Naive thymus-derived CD4-positive, alpha-beta T cell (primary cell): ENCODE measurements at regions of chr22 and their contacts with region 1.

Region 1: DNA sequence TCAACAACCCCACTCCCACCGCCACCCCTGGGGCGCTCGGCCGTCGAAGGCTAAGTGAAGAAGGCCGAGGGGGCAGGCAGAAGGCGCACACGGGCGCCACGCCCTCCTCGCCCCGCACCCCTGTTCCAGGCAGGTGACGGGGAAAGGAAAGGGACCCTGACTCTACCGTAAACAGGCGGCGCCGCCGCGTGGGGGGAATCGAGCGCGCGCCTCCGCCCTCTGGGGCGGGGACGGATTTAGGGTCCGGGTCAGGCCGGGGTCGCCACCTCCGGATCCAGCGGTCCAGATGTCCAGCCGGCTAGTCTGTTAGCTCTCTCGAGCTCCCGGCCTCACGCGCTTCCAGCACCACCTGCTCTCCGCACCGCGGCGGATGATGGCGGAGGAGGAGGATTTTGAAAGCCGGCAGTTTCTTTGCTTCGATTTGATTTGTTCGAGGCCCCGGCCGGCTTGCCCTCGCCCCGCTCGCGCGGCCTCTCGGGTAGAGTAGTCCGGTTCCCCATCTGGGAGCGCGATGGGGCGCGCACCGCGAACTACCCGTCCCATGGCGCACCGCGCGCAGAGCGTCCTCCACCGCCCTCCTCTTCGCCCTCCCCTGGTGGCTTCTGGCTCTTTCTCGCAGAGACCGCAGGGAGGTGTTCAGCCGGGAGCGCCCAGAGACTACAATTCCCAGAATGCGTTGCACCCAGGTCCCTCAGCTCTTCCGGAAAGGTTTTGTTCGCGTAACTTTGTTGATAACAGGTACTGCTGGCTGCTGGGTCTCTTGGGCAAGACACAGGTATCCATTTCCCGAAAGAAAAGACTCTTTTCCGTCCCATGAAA is at the start of gene RANGAP1:
- DNase-seq: peak; percentile 95 to 99 (median 99)
- ATAC-seq: peak; percentile 96
- H3K4me3 ChIP-seq: peak within 1 kb of the TSS; percentile 93
- H3K4me3 Mint-ChIP-seq: peak within 1 kb of the TSS; percentile 90 to 99 (median 96)
- H3K27ac ChIP-seq: peak within 1 kb of the TSS; percentile 99
- H3K27ac Mint-ChIP-seq: peak within 1 kb of the TSS; percentile 95 to 99 (median 98)
- H3K4me1 ChIP-seq: peaks cover 10 to 15% of the 10 kb centered on the region in 2 donors
- H3K4me1 Mint-ChIP-seq: peaks cover 21 to 46% (median 42%) of the 10 kb centered on the region in 7 donors
- H3K27me3 ChIP-seq: no peaks in the 10 kb centered on the region
- H3K27me3 Mint-ChIP-seq: no peaks in the 10 kb centered on the region
- total RNA-seq, gene RANGAP1: 60.7 to 122 (median 72.4) TPM

Region 2: DNA sequence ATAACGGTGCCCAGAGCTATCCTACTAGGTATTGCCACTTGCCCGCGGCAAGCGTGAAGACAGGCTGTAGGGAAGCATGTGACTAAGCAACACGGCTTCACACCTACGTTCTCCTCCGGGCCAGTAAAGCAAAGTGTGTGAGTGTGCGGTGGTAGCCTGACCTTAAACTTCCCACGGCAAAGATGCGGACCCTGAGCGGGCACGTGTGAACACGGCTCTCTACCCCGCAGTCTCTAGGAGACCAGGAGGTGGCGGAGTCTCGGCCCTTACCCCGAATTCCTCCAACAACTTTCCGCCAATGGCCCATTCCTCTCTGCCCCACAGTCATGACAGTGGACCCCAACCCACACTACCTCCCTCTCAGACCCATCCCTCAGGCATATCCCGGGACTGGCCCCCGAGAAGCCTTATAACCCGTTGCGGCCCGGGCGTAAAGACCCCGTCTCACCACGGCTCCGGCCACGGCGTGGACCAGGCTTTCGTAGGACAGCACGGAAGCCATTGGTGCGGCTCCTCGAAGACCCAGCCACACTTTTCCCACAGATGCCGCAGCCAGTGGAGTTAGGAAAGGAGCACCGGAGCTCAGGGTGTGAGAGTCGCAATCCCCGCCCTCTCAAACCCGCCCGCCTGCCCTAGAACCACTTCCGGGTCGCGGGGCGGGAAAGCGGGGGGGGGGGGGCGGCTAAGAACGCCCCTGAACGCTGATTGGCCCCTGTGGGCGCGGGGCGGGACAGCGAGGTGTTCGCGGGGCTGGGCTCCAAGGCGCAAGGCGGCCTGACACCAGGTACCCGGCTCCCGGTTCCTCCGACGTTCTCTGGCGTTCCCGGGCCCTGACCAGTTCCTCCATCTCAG is 467.1 kb before region 1 on chr22 and contains the start of gene SLC25A17:
- CTCF ChIA-PET with region 1: no interaction called
- POLR2A ChIA-PET with region 1: no interaction called
- intact Hi-C with region 1: loop called in 1 of 2 experiments (anchors 1 kb)
- DNase-seq: peak; percentile 71 to 88 (median 82)
- ATAC-seq: peak; percentile 95
- H3K4me3 ChIP-seq: peak within 1 kb of the TSS; percentile 100
- H3K4me3 Mint-ChIP-seq: peak within 1 kb of the TSS; percentile 79 to 99 (median 93)
- H3K27ac ChIP-seq: peak within 1 kb of the TSS; percentile 86
- H3K27ac Mint-ChIP-seq: peak within 1 kb of the TSS; percentile 57 to 96 (median 88)
- H3K4me1 ChIP-seq: peaks cover 9 to 26% of the 10 kb centered on the region in 2 donors
- H3K4me1 Mint-ChIP-seq: peaks cover 22 to 42% (median 37%) of the 10 kb centered on the region in 7 donors
- H3K27me3 ChIP-seq: no peaks in the 10 kb centered on the region
- H3K27me3 Mint-ChIP-seq: no peaks in the 10 kb centered on the region
- total RNA-seq, gene SLC25A17: 6.8 to 22.1 (median 13.1) TPM

Region 3: DNA sequence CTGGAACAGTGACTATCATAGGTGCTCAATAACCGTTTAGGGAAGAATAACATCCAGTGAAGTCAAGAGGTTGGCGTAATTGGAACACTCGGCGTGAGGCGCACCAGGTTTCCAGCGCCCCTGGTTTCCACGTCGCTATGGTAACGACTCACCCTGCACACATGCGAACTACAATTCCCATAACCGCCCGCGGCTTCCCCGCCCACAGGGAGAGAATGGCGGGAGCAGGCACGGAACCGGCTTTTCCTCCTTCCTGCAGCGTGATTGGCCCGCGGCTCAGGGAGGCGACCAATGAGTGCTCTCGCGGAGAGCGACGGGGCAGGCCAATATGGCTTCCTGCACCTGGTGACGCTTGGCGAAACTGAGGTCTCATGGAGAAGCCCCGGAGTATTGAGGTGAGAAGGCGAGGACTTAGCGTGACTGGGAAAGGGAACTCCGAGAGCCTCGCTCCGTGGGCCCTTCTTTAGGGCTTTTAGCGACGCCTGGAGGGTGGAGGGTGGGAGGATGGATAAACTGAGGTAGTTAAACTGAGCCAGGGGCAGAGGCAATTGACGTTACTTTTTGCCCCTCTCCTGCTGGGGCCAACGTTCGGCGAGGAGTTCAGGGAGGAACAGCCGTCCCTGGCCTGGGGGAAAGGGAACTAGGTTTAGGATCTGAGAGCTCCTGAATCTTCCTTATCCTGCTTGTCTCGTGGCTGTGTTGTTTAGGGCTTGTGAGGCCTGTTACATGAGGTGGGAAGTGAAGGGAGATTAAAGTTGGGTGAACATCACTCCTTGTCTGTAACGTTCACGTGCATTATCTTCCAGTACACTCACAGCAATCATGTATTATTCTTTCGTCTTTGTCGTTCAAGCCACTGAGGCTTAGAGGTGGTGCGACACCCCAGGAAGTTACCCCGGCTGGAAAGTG is 80.8 kb before region 1 on chr22 and contains the start of gene L3MBTL2:
- CTCF ChIA-PET with region 1: no interaction called
- POLR2A ChIA-PET with region 1: interaction called, 3 read pairs
- intact Hi-C with region 1: loop called (anchors 1 kb)
- DNase-seq: peak; percentile 89 to 99 (median 97)
- ATAC-seq: peak; percentile 100
- H3K4me3 ChIP-seq: peak within 1 kb of the TSS; percentile 94
- H3K4me3 Mint-ChIP-seq: peak within 1 kb of the TSS; percentile 87 to 100 (median 96)
- H3K27ac ChIP-seq: peak within 1 kb of the TSS; percentile 85
- H3K27ac Mint-ChIP-seq: peak within 1 kb of the TSS; percentile 88 to 98 (median 92)
- H3K4me1 ChIP-seq: peaks cover 4 to 10% of the 10 kb centered on the region in 2 donors
- H3K4me1 Mint-ChIP-seq: peaks cover 10 to 40% (median 36%) of the 10 kb centered on the region in 7 donors
- H3K27me3 ChIP-seq: no peaks in the 10 kb centered on the region
- H3K27me3 Mint-ChIP-seq: peaks cover 0 to 26% (median 0%) of the 10 kb centered on the region in 5 donors
- total RNA-seq, gene L3MBTL2: 31.6 to 45.9 (median 43.3) TPM

Region 4: GRCh38 chr22:41381329-41382097 is 95.5 kb after region 1 on chr22 and contains the start of gene TEF:
- CTCF ChIA-PET with region 1: no interaction called
- POLR2A ChIA-PET with region 1: interaction called, 23 read pairs
- intact Hi-C with region 1: loop called (anchors 1 kb)
- DNase-seq: peak; percentile 97 to 99 (median 98)
- ATAC-seq: peak; percentile 89
- H3K4me3 ChIP-seq: peak within 1 kb of the TSS; percentile 86
- H3K4me3 Mint-ChIP-seq: peak within 1 kb of the TSS; percentile 90 to 97 (median 94)
- H3K27ac ChIP-seq: peak within 1 kb of the TSS; percentile 95
- H3K27ac Mint-ChIP-seq: peak within 1 kb of the TSS; percentile 94 to 99 (median 98)
- H3K4me1 ChIP-seq: peaks cover 5 to 14% of the 10 kb centered on the region in 2 donors
- H3K4me1 Mint-ChIP-seq: peaks cover 5 to 29% (median 19%) of the 10 kb centered on the region in 7 donors
- H3K27me3 ChIP-seq: no peaks in the 10 kb centered on the region
- H3K27me3 Mint-ChIP-seq: peaks cover 0 to 5% (median 0%) of the 10 kb centered on the region in 5 donors
- total RNA-seq, gene TEF: 3.8 to 8.4 (median 6.2) TPM

Region 5: GRCh38 chr22:41589391-41590241 is 303.6 kb after region 1 on chr22 and contains the start of gene PMM1:
- CTCF ChIA-PET with region 1: no interaction called
- POLR2A ChIA-PET with region 1: interaction called, 7 read pairs
- intact Hi-C with region 1: loop called in 1 of 2 experiments (anchors 1 kb)
- DNase-seq: peak; percentile 97 to 100 (median 100)
- ATAC-seq: peak; percentile 99
- H3K4me3 ChIP-seq: peak within 1 kb of the TSS; percentile 97
- H3K4me3 Mint-ChIP-seq: peak within 1 kb of the TSS; percentile 76 to 96 (median 93)
- H3K27ac ChIP-seq: peak within 1 kb of the TSS; percentile 79
- H3K27ac Mint-ChIP-seq: peak within 1 kb of the TSS; percentile 81 to 93 (median 86)
- H3K4me1 ChIP-seq: peaks cover 9 to 11% of the 10 kb centered on the region in 2 donors
- H3K4me1 Mint-ChIP-seq: peaks cover 5 to 28% (median 22%) of the 10 kb centered on the region in 7 donors
- H3K27me3 ChIP-seq: no peaks in the 10 kb centered on the region
- H3K27me3 Mint-ChIP-seq: no peaks in the 10 kb centered on the region
- total RNA-seq, gene PMM1: 22.5 to 34.3 (median 26.9) TPM

Region 6: DNA sequence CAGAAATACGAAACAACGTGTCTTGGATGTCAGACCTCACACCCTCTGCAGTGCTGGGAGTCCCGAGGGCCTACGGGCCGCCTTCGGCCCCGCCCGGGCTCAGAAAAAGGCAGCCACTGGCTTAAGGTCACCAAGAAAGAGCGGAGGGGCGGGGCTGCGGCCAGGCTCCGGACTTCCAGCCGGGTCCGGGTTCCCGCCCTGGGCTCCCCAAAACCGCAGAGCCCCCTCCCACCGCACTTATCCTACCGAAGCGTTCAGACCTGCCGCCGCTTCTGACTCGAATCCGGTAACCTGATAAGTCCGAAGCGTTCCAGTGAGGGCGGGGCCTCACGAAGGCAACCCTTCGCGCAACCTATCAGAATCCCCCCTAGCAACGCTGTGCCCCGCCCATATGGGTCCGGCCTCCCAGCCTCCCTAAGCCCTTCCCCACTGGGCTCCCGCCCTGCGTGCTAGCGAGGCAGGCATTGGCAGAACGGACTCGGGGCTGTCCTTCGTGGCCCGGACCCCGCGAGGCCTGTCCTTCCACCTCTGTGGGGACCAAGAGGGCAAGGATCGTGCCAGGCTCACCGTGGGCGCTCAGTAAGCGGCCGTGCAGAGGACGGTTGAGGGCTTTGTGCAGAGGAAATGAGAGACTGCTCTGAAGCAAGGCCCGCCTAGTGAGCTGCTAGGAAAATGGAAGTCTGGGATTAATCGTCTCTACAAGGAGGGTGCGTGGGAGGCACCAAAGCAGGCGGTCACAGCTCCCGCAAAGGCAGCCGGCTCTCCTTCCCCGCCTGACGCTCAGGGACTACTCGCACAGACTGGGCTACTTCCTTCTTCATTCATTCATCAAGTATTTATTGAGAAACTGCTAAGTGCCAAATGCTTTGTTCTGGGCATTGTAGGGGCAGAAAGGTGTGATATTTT is 784.7 kb after region 1 on chr22 and contains the start of gene NAGA:
- CTCF ChIA-PET with region 1: no interaction called
- POLR2A ChIA-PET with region 1: no interaction called
- intact Hi-C with region 1: loop called in 1 of 2 experiments (anchors 5 kb)
- DNase-seq: peak; percentile 79 to 91 (median 88)
- ATAC-seq: peak; percentile 99
- H3K4me3 ChIP-seq: peak within 1 kb of the TSS; percentile 75
- H3K4me3 Mint-ChIP-seq: peak within 1 kb of the TSS; percentile 86 to 96 (median 94)
- H3K27ac ChIP-seq: peak within 1 kb of the TSS; percentile 75
- H3K27ac Mint-ChIP-seq: peak within 1 kb of the TSS; percentile 81 to 94 (median 92)
- H3K4me1 ChIP-seq: peaks cover 16 to 22% of the 10 kb centered on the region in 2 donors
- H3K4me1 Mint-ChIP-seq: peaks cover 22 to 54% (median 45%) of the 10 kb centered on the region in 7 donors
- H3K27me3 ChIP-seq: no peaks in the 10 kb centered on the region
- H3K27me3 Mint-ChIP-seq: no peaks in the 10 kb centered on the region
- total RNA-seq, gene NAGA: 7.6 to 38.8 (median 9.4) TPM